Transverse colon (tissue), 4 donors: ENCODE measurements at regions of chr20 and their contacts with region 1.

Region 1: DNA sequence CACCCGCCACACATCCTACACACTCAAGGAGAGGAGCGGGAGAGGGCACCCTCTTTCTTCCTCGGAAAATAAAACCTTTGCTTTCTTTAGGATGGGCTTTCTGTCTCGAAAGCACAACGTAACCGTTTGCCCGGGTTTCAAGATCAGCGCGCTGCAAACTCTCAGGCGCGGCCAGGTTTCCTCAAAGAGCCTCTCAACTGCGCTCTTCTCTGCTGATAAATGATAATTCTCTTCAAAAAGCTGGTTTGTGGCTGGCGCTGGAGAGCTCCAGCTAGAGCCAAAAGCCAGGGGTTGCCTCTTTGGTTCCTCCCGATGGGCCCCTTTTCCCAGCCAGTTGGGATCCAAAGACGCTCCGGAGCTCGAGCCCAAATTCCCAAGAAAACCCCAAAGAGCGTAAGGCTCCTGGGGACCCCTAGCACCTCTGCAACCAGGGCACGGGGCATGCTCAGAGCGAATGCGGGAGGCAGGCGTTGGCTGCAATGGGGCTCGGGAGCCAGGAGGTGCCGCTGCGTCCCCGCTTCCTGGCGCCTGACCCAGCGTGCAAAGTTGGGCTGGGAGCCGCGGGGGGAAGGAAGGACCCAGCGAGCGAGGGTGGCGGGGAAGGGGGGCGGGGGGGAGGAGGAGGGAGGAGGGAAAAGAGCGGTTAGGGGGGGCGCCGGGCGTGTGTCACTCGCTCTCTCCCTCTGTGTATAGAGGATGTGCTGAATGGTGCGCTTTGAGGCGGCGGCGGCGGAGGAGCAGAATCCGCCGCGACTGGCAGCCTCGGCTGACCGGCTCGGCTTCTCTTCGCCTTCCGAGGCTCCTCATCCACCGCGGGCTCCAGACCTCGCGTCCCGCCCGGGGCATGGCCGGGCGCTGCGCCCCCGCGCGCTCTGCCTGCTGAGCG is at the start of gene PLCB1:
- DNase-seq: peak; percentile 77
- H3K4me3 ChIP-seq: peak within 1 kb of the TSS; percentile 40 to 69 (median 62)
- H3K27ac ChIP-seq: peak within 1 kb of the TSS; percentile 79 to 88 (median 86)
- H3K4me1 ChIP-seq: peaks cover 0 to 27% (median 5%) of the 10 kb centered on the region in 4 donors
- H3K27me3 ChIP-seq: peaks cover 31% of the 10 kb centered on the region
- CTCF ChIP-seq: peak; percentile 62 to 83 (median 81)
- EP300 ChIP-seq: no peak
- POLR2A ChIP-seq: no peak
- total RNA-seq, gene PLCB1: 13.1 to 18.6 (median 15.8) TPM

Region 2: DNA sequence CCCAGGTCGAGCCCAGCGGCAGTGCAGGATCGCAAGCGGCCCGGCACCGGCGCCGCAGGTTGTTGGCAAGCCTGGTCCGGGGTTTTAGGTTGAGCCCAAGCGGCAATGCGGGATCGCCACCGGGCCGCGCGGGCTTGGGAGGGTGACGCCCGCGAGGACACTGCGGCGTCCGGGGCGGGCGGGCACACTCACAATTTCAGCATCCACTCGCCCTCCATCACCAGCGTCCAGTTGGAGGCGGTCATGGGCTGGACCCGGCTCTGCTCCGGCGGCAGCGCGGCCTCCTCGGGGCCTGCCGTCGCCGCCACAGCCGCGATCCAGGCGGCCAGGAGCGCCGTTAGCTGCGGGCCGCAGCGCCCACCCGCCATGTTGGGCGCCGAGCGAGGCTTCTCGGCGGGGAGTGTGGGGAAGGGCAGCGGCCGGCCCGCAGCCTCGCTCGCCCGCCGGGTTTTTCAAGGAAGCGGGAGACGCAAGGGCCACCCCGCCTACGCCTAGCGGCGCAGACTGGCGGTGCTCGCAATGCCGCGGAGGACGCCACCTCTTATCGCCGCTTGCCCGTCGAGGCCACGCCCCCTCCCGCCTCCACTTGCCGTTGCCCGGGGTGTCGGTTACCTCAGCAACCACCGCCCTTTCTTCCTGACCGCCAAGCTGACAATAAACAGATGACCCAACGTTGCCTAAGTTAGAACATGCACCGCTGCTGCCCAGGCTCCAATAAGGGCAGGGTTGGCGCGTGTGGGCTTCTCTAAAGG is 112.4 kb before region 1 on chr20 and contains the start of gene TMX4:
- in situ Hi-C with region 1: no loop called
- intact Hi-C with region 1: loop called (anchors 1 kb)
- DNase-seq: peak; percentile 99
- H3K4me3 ChIP-seq: peak within 1 kb of the TSS; percentile 64 to 99 (median 90)
- H3K27ac ChIP-seq: peak within 1 kb of the TSS; percentile 93 to 100 (median 98)
- H3K4me1 ChIP-seq: peaks cover 0 to 16% (median 9%) of the 10 kb centered on the region in 4 donors
- H3K27me3 ChIP-seq: no peaks in the 10 kb centered on the region
- CTCF ChIP-seq: peak; percentile 21 to 87 (median 64)
- EP300 ChIP-seq: peak; percentile 31
- POLR2A ChIP-seq: peak; percentile 87
- total RNA-seq, gene TMX4: 23.6 to 32.9 (median 28.1) TPM

Region 3: GRCh38 chr20:8223091-8223870 is 91.4 kb after region 1 on chr20:
- in situ Hi-C with region 1: no loop called
- intact Hi-C with region 1: no loop called
- DNase-seq: no peak
- H3K4me3 ChIP-seq: no peak overlapping the region
- H3K27ac ChIP-seq: peak overlapping the region in 3 of 4 donors; percentile 27 to 63 (median 40)
- H3K4me1 ChIP-seq: peaks cover 0 to 14% (median 6%) of the 10 kb centered on the region in 4 donors
- H3K27me3 ChIP-seq: no peaks in the 10 kb centered on the region
- CTCF ChIP-seq: no peak
- EP300 ChIP-seq: no peak
- POLR2A ChIP-seq: no peak

Region 4: GRCh38 chr20:8305449-8305978 is 173.7 kb after region 1 on chr20:
- in situ Hi-C with region 1: loop called in 2 of 4 experiments (anchors 10 to 25 kb)
- intact Hi-C with region 1: no loop called
- DNase-seq: peak; percentile 53
- H3K4me3 ChIP-seq: no peak overlapping the region
- H3K27ac ChIP-seq: no peak overlapping the region
- H3K4me1 ChIP-seq: peaks cover 0 to 4% (median 0%) of the 10 kb centered on the region in 4 donors
- H3K27me3 ChIP-seq: no peaks in the 10 kb centered on the region
- CTCF ChIP-seq: peak; percentile 36 to 68 (median 48)
- EP300 ChIP-seq: no peak
- POLR2A ChIP-seq: no peak

Region 5: GRCh38 chr20:8361006-8361652 is 229.3 kb after region 1 on chr20:
- in situ Hi-C with region 1: no loop called
- intact Hi-C with region 1: loop called (anchors 10 kb)
- DNase-seq: no peak
- H3K4me3 ChIP-seq: no peak overlapping the region
- H3K27ac ChIP-seq: no peak overlapping the region
- H3K4me1 ChIP-seq: peaks cover 0 to 13% (median 0%) of the 10 kb centered on the region in 4 donors
- H3K27me3 ChIP-seq: no peaks in the 10 kb centered on the region
- CTCF ChIP-seq: no peak
- EP300 ChIP-seq: no peak
- POLR2A ChIP-seq: no peak

Region 6: DNA sequence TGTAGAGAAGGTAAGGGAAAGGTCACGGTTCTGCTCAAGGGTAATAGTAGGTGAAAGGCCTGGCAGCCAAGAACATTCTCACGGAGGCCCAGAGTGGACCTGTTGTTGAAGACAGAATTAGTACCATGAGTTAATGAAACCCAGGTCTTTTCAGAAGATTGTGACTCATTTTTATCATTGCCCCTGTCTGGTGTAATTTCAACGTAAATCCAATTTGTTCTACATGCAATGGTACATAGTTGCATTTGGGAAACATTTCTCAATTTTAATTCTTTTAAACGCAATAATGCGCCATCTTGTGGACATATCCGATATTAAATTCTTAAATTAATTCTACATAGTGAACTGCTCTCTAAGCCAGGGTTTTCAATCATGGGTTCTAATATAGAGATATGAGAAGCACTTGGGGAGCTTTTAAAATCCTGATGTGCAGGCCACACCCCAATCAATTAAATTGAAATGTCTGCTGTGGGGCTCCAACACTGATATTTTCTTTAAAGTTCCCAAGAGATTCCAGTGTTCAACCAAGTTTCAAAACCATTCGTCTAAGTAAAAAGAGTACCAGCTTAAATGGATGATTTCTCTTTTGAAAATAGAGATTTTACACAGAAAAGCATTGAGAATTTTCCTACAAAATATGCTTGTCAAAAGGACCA is 257.7 kb after region 1 on chr20:
- in situ Hi-C with region 1: loop called in 3 of 4 experiments (anchors 10 to 25 kb)
- intact Hi-C with region 1: loop called (anchors 2 kb)
- DNase-seq: no peak
- H3K4me3 ChIP-seq: no peak overlapping the region
- H3K27ac ChIP-seq: no peak overlapping the region
- H3K4me1 ChIP-seq: peaks cover 0 to 15% (median 0%) of the 10 kb centered on the region in 4 donors
- H3K27me3 ChIP-seq: no peaks in the 10 kb centered on the region
- CTCF ChIP-seq: peak; percentile 47 to 61 (median 51)
- EP300 ChIP-seq: no peak
- POLR2A ChIP-seq: no peak

Region 7: GRCh38 chr20:8722276-8722928 is 590.6 kb after region 1 on chr20:
- in situ Hi-C with region 1: loop called (anchors 5 to 25 kb)
- intact Hi-C with region 1: loop called (anchors 5 kb)
- DNase-seq: peak; percentile 10
- H3K4me3 ChIP-seq: no peak overlapping the region
- H3K27ac ChIP-seq: no peak overlapping the region
- H3K4me1 ChIP-seq: peaks cover 0 to 3% (median 0%) of the 10 kb centered on the region in 4 donors
- H3K27me3 ChIP-seq: no peaks in the 10 kb centered on the region
- CTCF ChIP-seq: peak; percentile 64 to 74 (median 70)
- EP300 ChIP-seq: no peak
- POLR2A ChIP-seq: no peak